Right cardiac atrium (tissue), 5 donors: ENCODE measurements at regions of chr10 and their contacts with region 1.

Region 1: GRCh38 chr10:23314835-23315239 is 29.8 kb downstream of the C10orf67 start:
- DNase-seq: no peak
- ATAC-seq: peak; percentile 41 to 60
- H3K4me3 ChIP-seq: no peak overlapping the region
- H3K27ac ChIP-seq: no peak overlapping the region
- H3K4me1 ChIP-seq: peaks cover 4% of the 10 kb centered on the region
- H3K27me3 ChIP-seq: no peaks in the 10 kb centered on the region

Region 2: GRCh38 chr10:23204773-23205172 is 110.1 kb before region 1 on chr10:
- intact Hi-C with region 1: no loop called
- DNase-seq: no peak
- ATAC-seq: no peak
- H3K4me3 ChIP-seq: no peak overlapping the region
- H3K27ac ChIP-seq: no peak overlapping the region
- H3K4me1 ChIP-seq: no peaks in the 10 kb centered on the region
- H3K27me3 ChIP-seq: peaks cover 17% of the 10 kb centered on the region

Region 3: GRCh38 chr10:23702977-23703414 is 388.2 kb after region 1 on chr10:
- intact Hi-C with region 1: loop called in 2 of 4 experiments (anchors 5 kb)
- DNase-seq: peak in 2 of 3 donors; percentile 32 to 33
- ATAC-seq: peak; percentile 75 to 84
- H3K4me3 ChIP-seq: no peak overlapping the region
- H3K27ac ChIP-seq: no peak overlapping the region
- H3K4me1 ChIP-seq: no peaks in the 10 kb centered on the region
- H3K27me3 ChIP-seq: peaks cover 2% of the 10 kb centered on the region